ENCODE measurements at regions of chr11 and their contacts with region 1.

Region 1: GRCh38 chr11:74634537-74634936 is 42.2 kb downstream of the POLD3 start:
- DNase-seq: peak; percentile 33 to 80
- ATAC-seq: peak; percentile 93 to 94
- H3K4me3 ChIP-seq: no peak overlapping the region
- H3K27ac ChIP-seq: peak overlapping the region; percentile 61 to 63
- H3K4me1 ChIP-seq: peaks cover 52% of the 10 kb centered on the region
- CTCF ChIP-seq: peak; percentile 61
- EP300 ChIP-seq: no peak
- POLR2A ChIP-seq: no peak
- RAD21 ChIP-seq: peak; percentile 69

Region 2: GRCh38 chr11:74570266-74571061 is 64.1 kb before region 1 on chr11:
- CTCF ChIA-PET with region 1: no interaction called
- POLR2A ChIA-PET with region 1: no interaction called
- DNase-seq: peak; percentile 70 to 83
- ATAC-seq: peak; percentile 93 to 97
- H3K4me3 ChIP-seq: no peak overlapping the region
- H3K27ac ChIP-seq: no peak overlapping the region
- H3K4me1 ChIP-seq: peaks cover 12% of the 10 kb centered on the region; the same call in 1 of the 3 replicates
- CTCF ChIP-seq: peak; percentile 91
- EP300 ChIP-seq: no peak
- POLR2A ChIP-seq: no peak
- RAD21 ChIP-seq: peak; percentile 91 to 95

Region 3: DNA sequence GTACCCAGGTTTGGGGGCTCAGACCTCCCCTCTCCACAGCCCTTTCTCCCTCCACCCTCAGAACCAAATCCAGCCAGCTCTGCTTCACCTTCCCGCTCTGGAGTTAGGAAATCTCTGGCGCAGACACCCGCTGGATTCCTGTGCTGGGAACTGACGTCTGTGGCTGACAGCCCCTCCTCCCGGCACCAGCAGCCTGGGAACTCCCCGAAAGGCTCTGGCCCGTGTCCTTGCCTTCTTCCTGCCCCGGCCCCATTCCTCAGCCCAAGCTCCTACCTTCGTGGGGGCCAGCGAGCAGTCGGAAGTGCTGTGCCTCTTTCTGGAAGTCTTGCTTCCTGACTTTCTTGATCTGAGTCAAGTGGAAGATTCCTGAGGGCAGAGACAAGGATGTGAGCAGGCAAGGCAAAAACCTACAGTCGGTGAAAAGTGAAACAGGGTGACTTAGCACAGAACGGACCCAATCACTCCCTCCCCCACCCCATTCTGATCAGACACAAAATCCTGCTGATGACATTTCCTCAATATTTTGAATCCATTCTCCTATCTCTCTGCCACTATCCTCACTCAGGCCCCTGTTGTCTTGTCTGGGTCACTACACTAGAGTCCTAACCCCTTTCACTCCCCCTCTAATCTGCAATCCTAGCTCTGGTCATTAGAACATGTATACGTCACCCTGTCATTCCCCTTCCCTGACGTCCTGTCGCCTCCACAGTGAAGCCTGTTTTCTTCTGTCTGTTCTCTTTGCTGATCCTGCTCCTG is 62.6 kb after region 1 on chr11:
- CTCF ChIA-PET with region 1: interaction called, 46 read pairs
- POLR2A ChIA-PET with region 1: no interaction called
- DNase-seq: peak; percentile 56 to 85
- ATAC-seq: peak; percentile 71 to 85
- H3K4me3 ChIP-seq: no peak overlapping the region
- H3K27ac ChIP-seq: peak overlapping the region; percentile 84 to 88
- H3K4me1 ChIP-seq: peaks cover 51% of the 10 kb centered on the region
- CTCF ChIP-seq: no peak
- EP300 ChIP-seq: peak; percentile 53 to 72; a peak in 1 of 5 replicates
- POLR2A ChIP-seq: no peak
- RAD21 ChIP-seq: no peak

Region 4: GRCh38 chr11:74966651-74967050 is 332.1 kb after region 1 on chr11:
- CTCF ChIA-PET with region 1: no interaction called
- POLR2A ChIA-PET with region 1: no interaction called
- DNase-seq: no peak
- ATAC-seq: no peak
- H3K4me3 ChIP-seq: no peak overlapping the region
- H3K27ac ChIP-seq: 0 out of 6 replicates have a peak overlapping the region, but pooled peaks of 1 of the 2 experiments have one; percentile 30
- H3K4me1 ChIP-seq: no peaks in the 10 kb centered on the region
- CTCF ChIP-seq: no peak
- EP300 ChIP-seq: no peak
- POLR2A ChIP-seq: no peak
- RAD21 ChIP-seq: no peak

Measured in A549 (cell line).